Activated CD4-positive, alpha-beta memory T cell treated with anti-CD3 and anti-CD28 coated beads, Interleukin-2, amount 10 ng/mL, durations not matched to agents 7 days and 5 days (primary cell): ENCODE measurements at regions of chr16 and their contacts with region 1.

Region 1: GRCh38 chr16:31117391-31118197 is at the start of gene KAT8:
- DNase-seq: peak; percentile 98
- H3K4me3 Mint-ChIP-seq: peak within 1 kb of the TSS; percentile 73
- H3K27ac Mint-ChIP-seq: peak within 1 kb of the TSS; percentile 78
- H3K4me1 Mint-ChIP-seq: peaks cover 32% of the 10 kb centered on the region
- H3K27me3 Mint-ChIP-seq: no peaks in the 10 kb centered on the region
- total RNA-seq, gene KAT8: 43.7 to 44.3 TPM

Region 2: DNA sequence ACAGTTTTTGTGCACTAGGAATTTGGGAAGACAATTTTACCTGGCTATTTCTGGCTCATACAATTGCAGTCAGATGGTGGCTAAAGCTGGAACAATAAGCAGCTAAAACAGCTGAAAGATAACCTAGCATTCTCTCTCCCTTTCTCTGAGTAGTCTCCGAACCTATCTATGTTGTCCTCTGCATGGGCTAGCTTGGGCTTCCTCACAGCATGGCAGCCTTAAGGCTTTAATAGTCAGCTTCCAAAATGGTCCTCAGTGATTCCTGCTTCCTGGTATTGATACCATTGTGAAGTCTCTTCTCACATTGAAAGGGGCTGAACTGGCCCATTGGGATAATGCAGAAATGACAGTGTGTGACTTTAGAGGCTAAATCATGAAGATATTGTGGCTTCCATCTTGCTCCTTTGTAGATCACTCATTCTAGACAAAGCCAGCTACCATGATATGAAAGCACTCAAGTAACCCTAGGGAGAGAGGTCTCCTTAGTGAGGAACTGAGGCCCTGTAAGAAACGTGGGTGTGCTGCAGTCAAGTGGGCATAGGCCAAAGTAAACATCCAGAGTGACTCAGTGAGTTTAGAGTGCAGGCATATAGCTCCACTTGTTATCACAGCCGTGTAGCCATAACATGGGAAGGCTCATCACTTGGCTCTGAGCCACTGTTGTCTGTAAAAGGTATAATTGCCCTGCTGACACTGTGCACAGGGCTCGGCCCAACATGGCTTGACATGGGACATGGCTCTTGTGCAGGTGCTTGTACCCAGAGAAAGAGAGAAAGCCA is 17.5 kb before region 1 on chr16:
- CTCF ChIA-PET with region 1: interaction called, 3 read pairs
- POLR2A ChIA-PET with region 1: interaction called, 12 read pairs
- DNase-seq: no peak
- H3K4me3 Mint-ChIP-seq: no peak overlapping the region
- H3K27ac Mint-ChIP-seq: no peak overlapping the region
- H3K4me1 Mint-ChIP-seq: peaks cover 9% of the 10 kb centered on the region
- H3K27me3 Mint-ChIP-seq: no peaks in the 10 kb centered on the region